A673 (cell line): ENCODE measurements at regions of chr1 and their contacts with region 1.

Region 1: GRCh38 chr1:224149713-224150112 is 33.3 kb upstream of the DEGS1 start:
- DNase-seq: no peak
- H3K4me3 ChIP-seq: no peak overlapping the region
- H3K27ac ChIP-seq: no peak overlapping the region
- H3K4me1 ChIP-seq: no peaks in the 10 kb centered on the region
- H3K27me3 ChIP-seq: no peaks in the 10 kb centered on the region
- CTCF ChIP-seq: no peak

Region 2: DNA sequence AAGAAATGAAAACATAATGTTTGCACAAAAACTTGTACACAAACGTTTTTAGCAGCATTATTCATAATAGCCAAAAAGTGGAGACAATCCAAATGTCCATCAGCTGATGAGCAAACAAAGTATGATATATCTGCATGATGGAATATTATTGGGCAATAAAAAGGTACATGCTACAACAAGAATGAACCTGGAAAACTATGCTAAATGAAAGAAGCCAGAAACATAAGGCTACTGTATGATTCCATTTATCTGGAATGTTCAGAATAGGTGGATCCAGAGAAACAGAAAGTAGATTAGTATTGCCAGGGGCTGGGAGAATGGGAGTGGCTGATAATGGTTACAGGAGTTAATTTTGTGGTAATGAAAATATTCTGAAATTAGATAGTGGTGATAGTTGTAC is 16.8 kb before region 1 on chr1:
- CTCF ChIA-PET with region 1: no interaction called
- POLR2A ChIA-PET with region 1: no interaction called
- intact Hi-C with region 1: no loop called
- DNase-seq: no peak
- H3K4me3 ChIP-seq: no peak overlapping the region
- H3K27ac ChIP-seq: no peak overlapping the region
- H3K4me1 ChIP-seq: no peaks in the 10 kb centered on the region
- H3K27me3 ChIP-seq: no peaks in the 10 kb centered on the region
- CTCF ChIP-seq: no peak

Region 3: GRCh38 chr1:224160171-224160682 is 10.5 kb after region 1 on chr1:
- CTCF ChIA-PET with region 1: interaction called, 10 read pairs
- POLR2A ChIA-PET with region 1: no interaction called
- intact Hi-C with region 1: no loop called
- DNase-seq: no peak
- H3K4me3 ChIP-seq: no peak overlapping the region
- H3K27ac ChIP-seq: no peak overlapping the region
- H3K4me1 ChIP-seq: no peaks in the 10 kb centered on the region
- H3K27me3 ChIP-seq: no peaks in the 10 kb centered on the region
- CTCF ChIP-seq: no peak

Region 4: DNA sequence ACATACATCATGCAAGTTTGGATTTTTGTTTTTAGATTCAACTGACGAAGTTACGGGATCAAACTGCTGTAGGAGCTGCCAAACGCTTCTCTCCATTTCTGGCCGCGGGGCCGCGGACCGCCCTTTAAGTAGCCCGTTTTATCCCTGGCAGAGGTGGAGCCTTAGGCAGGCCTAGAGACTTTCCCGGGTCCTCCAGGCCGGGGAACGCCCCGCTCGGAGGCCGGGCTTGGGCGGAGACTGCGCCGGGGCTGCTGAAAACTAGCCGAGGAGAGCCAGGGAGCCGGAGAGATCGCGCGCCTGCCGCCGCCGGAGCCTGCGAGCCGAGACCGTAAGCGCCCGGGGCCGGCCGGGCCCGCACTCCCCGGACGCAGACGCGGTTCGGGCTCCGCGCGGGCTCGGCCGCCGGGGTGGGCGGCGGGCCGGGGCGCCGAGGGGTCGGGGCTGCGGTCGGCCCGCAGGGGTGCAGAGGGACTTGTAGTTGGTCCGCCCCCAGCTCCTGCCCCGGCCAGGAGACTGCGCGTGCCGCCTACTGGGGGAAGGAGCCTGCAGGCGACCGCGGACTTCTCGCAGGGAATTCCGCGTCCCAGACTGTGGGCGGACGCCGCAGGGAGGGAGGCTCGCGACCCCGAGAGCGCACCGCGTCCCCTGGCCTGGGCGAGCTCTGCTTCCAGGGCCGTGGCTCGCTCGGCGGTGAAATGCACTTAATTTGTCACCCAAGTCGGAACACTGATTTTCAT is 1660.3 kb after region 1 on chr1 and contains the start of gene EPHX1:
- CTCF ChIA-PET with region 1: interaction called, 14 read pairs
- POLR2A ChIA-PET with region 1: no interaction called
- intact Hi-C with region 1: no loop called
- DNase-seq: peak; percentile 94
- H3K4me3 ChIP-seq: peak within 1 kb of the TSS; percentile 63
- H3K27ac ChIP-seq: peak within 1 kb of the TSS; percentile 62
- H3K4me1 ChIP-seq: peaks cover 38% of the 10 kb centered on the region
- H3K27me3 ChIP-seq: no peaks in the 10 kb centered on the region
- CTCF ChIP-seq: peak; percentile 40; the same call in 1 of the 2 replicates
- total RNA-seq, gene EPHX1: 22.4 and 22.8 TPM in 2 replicates